Breast epithelium (tissue), 4 donors: ENCODE measurements at regions of chr22 and their contacts with region 1.

Region 1: DNA sequence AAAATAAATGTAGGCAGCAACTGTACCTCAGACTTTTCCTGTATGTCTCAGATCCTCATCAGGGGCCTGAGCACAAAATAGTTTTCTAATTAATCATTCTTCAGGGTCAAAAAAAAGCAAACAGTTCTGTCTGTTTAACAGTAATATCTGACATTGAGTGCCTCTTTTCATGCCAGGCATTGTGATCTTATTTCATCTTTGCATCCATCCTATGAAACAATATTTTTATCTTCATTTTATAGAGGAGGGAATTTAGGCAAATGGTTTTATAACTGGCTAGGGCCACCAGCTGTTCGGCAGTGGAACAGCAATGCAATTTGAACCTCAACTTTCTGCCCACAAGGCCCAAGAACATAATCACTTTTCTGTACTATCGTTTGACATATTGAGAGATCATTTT is 145.6 kb downstream of the WNT7B start:
- DNase-seq: no peak
- H3K4me3 ChIP-seq: no peak overlapping the region
- H3K27ac ChIP-seq: no peak overlapping the region
- H3K4me1 ChIP-seq: no peaks in the 10 kb centered on the region
- H3K27me3 ChIP-seq: no peaks in the 10 kb centered on the region
- CTCF ChIP-seq: no peak
- POLR2A ChIP-seq: no peak

Region 2: GRCh38 chr22:44956840-44957767 is 874.3 kb before region 1 on chr22:
- intact Hi-C with region 1: loop called (anchors 5 kb)
- DNase-seq: no peak
- H3K4me3 ChIP-seq: no peak overlapping the region
- H3K27ac ChIP-seq: no peak overlapping the region
- H3K4me1 ChIP-seq: no peaks in the 10 kb centered on the region
- H3K27me3 ChIP-seq: no peaks in the 10 kb centered on the region
- CTCF ChIP-seq: no peak
- POLR2A ChIP-seq: no peak

Region 3: GRCh38 chr22:45688606-45689080 is 142.8 kb before region 1 on chr22:
- intact Hi-C with region 1: no loop called
- DNase-seq: no peak
- H3K4me3 ChIP-seq: no peak overlapping the region
- H3K27ac ChIP-seq: peak overlapping the region; percentile 27 to 37
- H3K4me1 ChIP-seq: peaks cover 0 to 6% of the 10 kb centered on the region in 2 donors
- H3K27me3 ChIP-seq: no peaks in the 10 kb centered on the region
- CTCF ChIP-seq: no peak
- POLR2A ChIP-seq: no peak

Region 4: DNA sequence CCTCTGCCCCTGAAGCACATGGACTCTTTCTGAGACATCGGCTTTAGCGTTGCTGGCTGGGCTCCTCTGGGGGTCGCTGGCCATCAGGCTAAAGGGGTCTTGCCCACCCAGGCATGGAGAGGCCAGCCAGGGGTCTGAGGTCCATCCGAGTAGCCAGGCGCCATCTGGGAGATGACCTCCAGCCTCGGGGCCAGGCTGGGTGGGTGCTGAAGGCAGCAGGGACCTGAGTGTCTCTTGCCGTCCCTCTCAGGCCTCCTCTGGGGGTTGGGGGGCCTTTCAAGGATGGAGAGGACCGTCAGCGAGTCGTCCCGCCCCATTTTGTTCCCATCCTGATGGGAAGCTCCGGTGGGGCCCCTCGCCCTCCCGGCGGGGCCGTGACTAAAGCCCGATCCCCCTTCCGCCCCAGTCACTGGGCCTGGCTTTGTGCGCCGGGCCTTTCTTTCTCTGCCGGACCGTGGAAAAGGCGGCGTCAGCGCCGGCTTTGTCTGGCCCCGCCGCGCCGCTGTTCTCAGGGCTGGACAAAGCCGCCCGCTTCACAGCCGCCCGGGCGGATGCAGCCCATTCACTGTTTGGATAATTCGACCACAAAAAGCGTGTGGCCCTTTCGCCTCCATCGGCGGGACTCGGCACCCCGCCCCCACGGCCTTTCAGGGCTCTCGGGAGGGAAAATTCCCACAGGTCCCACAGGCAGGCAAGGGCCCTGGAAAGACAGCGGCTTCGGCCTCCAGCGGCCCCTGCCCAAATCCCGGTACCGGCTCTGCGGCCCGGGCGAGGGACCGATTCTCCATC is 58.1 kb after region 1 on chr22:
- intact Hi-C with region 1: no loop called
- DNase-seq: no peak
- H3K4me3 ChIP-seq: peak overlapping the region in 1 of 3 donors; percentile 22
- H3K27ac ChIP-seq: no peak overlapping the region
- H3K4me1 ChIP-seq: no peaks in the 10 kb centered on the region
- H3K27me3 ChIP-seq: peaks cover 0 to 13% of the 10 kb centered on the region in 2 donors
- CTCF ChIP-seq: no peak
- POLR2A ChIP-seq: no peak